Aorta (tissue), 5 donors: ENCODE measurements at regions of chr1 and their contacts with region 1.

Region 1: GRCh38 chr1:147541672-147542568 is 619 bp downstream of the BCL9 start:
- DNase-seq: peak; percentile 66 to 82
- ATAC-seq: peak; percentile 81
- H3K4me3 ChIP-seq: peak overlapping the region; percentile 63 to 92
- H3K27ac ChIP-seq: peak overlapping the region; percentile 0 to 95
- H3K4me1 ChIP-seq: peaks cover 0 to 4% of the 10 kb centered on the region in 2 donors
- H3K27me3 ChIP-seq: no peaks in the 10 kb centered on the region

Region 2: GRCh38 chr1:147246910-147247655 is 294.8 kb before region 1 on chr1:
- intact Hi-C with region 1: no loop called
- DNase-seq: no peak
- ATAC-seq: no peak
- H3K4me3 ChIP-seq: no peak overlapping the region
- H3K27ac ChIP-seq: no peak overlapping the region
- H3K4me1 ChIP-seq: peaks cover 2 to 3% of the 10 kb centered on the region in 2 donors
- H3K27me3 ChIP-seq: no peaks in the 10 kb centered on the region

Region 3: DNA sequence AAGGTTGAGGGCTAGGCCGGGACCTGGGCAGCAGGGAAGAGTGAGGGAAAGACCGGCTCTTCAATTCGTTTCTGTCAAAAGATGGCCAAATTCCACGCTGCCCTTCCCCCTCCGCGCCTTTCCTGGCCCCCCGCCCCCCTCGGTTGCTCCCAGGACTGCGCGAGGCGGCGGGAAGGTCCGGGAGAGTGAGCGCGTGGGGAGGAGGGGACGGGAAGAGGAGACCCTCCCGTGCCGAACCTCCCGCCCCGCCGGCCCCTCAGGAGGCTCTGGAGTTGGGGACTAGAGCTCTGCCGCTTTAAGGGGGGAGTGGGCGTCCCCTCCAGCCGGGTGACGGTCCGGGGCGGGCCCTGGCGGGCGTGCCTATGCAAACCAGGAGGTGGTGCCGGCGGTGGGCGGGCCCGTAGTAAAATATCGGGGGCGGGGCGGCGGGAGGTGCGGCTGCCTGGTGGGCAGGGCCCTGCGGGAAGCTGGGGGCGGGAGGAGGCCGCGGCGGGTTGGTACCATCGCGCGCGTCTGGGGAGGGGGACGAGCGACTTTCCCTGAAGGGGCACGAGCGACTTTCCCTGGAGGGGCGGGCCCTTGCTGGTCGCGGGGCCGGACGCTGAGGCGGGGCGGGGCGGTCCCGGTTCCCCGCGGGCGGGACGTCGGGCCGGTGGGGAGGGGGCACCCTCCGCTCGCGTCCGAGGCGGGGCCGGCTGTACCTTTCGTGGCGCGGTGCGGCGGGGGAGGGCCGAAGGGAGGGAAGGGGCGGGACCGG is 57.6 kb after region 1 on chr1:
- intact Hi-C with region 1: loop called (anchors 1 to 5 kb)
- DNase-seq: peak; percentile 98 to 100
- ATAC-seq: peak; percentile 97
- H3K4me3 ChIP-seq: peak overlapping the region; percentile 29 to 96
- H3K27ac ChIP-seq: peak overlapping the region in 1 of 2 donors; percentile 48
- H3K4me1 ChIP-seq: no peaks in the 10 kb centered on the region
- H3K27me3 ChIP-seq: no peaks in the 10 kb centered on the region